ENCODE measurements at regions of chr16 and their contacts with region 1.

Region 1: DNA sequence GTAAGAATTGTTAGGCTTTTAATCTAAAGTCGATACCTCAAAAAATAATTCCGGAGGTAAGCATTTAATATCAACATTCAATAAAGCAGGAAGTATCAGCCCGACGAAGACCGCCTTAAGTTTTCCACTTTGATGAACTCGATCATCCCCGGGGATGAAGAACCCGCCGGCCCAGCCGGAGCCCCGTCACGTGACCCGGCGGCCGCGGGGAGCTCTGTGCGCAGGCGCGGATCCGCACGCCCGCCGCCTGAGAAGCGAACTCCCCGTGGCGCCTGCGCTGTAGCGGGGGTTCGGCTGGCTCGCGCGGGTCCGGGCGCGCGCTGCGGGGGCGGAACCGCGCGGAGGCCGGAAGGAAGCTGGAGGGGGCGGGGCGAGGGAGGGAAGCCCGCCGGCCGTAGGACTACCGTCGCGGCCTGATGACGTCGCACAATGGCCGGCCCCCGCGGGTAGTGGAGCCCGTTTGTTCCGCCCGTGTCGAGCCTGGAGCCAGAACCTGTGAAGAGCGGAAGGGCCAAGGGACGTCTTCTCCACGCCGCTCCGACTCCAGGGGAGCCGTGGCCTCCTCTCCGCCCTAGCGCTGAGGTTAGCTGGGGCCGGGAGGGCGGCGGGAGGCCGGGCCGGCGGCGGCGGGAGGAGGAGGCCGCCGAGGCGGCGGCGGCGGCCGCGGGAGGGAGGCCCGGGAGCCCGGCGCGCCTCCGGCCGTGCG is at the start of gene ZC3H18:
- DNase-seq: peak; percentile 98
- H3K4me3 Mint-ChIP-seq: peak within 1 kb of the TSS; percentile 84
- H3K27ac Mint-ChIP-seq: peak within 1 kb of the TSS; percentile 83
- H3K4me1 Mint-ChIP-seq: peaks cover 40% of the 10 kb centered on the region
- H3K27me3 Mint-ChIP-seq: no peaks in the 10 kb centered on the region
- total RNA-seq, gene ZC3H18: 72.0 to 72.7 TPM

Region 2: DNA sequence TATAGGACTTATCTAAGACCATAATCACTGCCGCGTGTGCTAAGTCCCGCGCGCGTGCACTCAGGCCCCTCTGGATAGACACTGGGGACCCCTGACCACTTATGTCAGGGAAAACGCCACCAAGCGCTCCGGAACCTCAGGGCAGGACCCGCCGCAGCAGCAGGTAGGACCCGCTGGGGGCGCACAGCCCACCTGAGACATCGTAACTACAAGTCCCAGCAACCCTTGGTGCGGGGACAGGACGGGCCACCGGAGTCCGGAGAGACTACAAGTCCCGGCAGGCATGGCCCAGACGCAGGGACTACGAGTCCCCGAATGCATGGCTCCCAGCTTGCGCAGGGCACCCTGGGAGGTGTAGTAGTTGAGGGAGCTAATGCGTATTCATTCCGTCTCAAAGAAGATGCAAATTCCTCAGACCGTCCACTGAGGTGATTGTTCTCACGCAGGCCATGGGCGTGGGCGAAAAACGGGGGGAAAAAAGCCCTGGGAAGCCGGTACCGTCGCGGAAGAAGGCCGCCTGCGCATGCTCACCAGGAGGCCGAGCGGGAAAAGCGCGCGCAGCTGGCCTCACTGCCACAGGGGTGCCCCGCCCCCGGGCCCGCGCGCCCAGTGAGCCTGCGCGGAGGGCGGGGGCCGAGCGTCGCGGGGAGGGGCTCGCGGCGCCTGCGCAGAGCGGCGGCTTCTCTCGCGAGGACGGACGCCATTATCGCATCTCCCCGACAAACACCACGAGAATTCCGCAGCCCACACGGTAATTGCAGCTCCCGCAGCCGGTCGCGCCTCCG is 619.2 kb before region 1 on chr16 and contains the start of gene BANP:
- CTCF ChIA-PET with region 1: interaction called, 3 read pairs
- POLR2A ChIA-PET with region 1: no interaction called
- intact Hi-C with region 1: loop called (anchors 1 kb)
- DNase-seq: peak; percentile 98
- H3K4me3 Mint-ChIP-seq: peak within 1 kb of the TSS; percentile 96
- H3K27ac Mint-ChIP-seq: peak within 1 kb of the TSS; percentile 100
- H3K4me1 Mint-ChIP-seq: peaks cover 43% of the 10 kb centered on the region
- H3K27me3 Mint-ChIP-seq: peaks cover 2% of the 10 kb centered on the region
- total RNA-seq, gene BANP: 29.6 to 30.6 TPM

Region 3: GRCh38 chr16:88452482-88453216 is 117.5 kb before region 1 on chr16:
- CTCF ChIA-PET with region 1: interaction called, 4 read pairs
- POLR2A ChIA-PET with region 1: interaction called, 5 read pairs
- intact Hi-C with region 1: loop called (anchors 2 kb)
- DNase-seq: peak; percentile 99
- H3K4me3 Mint-ChIP-seq: peak overlapping the region; percentile 80
- H3K27ac Mint-ChIP-seq: peak overlapping the region; percentile 84
- H3K4me1 Mint-ChIP-seq: peaks cover 25% of the 10 kb centered on the region
- H3K27me3 Mint-ChIP-seq: no peaks in the 10 kb centered on the region

Region 4: GRCh38 chr16:88591577-88592021 is 21.5 kb after region 1 on chr16:
- CTCF ChIA-PET with region 1: no interaction called
- POLR2A ChIA-PET with region 1: interaction called, 24 read pairs
- intact Hi-C with region 1: loop called (anchors 2 kb)
- DNase-seq: peak; percentile 82
- H3K4me3 Mint-ChIP-seq: no peak overlapping the region
- H3K27ac Mint-ChIP-seq: peak overlapping the region; percentile 79
- H3K4me1 Mint-ChIP-seq: peaks cover 49% of the 10 kb centered on the region
- H3K27me3 Mint-ChIP-seq: no peaks in the 10 kb centered on the region

Region 5: DNA sequence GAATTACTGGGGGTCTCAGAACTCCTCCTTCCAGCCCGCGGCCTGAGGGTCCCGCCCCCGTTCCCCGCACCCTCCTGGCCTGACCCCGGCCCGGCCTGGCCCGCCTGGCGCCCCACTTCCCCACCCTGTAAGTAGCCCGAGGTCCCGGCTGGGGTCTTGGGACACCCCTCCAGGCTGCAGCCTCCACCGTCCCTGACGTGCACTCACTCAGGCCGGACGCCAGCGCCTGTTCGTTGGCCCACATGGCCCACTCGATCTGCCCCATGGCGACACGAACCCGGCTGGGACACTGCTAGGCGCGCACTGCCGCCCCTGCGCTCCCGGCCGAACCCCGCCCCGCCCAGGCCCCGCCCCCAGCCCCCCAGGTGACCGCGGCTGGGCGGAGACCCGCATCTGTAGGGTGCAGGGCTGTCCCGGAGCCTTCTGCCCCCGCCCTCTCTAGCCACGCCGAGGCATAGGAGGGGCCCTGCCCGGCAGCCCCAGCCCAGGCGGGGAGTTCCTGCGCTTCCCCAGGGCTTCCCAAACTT is 80.7 kb after region 1 on chr16 and contains the start of gene CYBA:
- CTCF ChIA-PET with region 1: no interaction called
- POLR2A ChIA-PET with region 1: interaction called, 4 read pairs
- intact Hi-C with region 1: loop called (anchors 1 kb)
- DNase-seq: peak; percentile 93
- H3K4me3 Mint-ChIP-seq: peak within 1 kb of the TSS; percentile 86
- H3K27ac Mint-ChIP-seq: peak within 1 kb of the TSS; percentile 97
- H3K4me1 Mint-ChIP-seq: peaks cover 14% of the 10 kb centered on the region
- H3K27me3 Mint-ChIP-seq: no peaks in the 10 kb centered on the region
- total RNA-seq, gene CYBA: 262 to 265 TPM

Region 6: GRCh38 chr16:88662843-88663606 is 92.9 kb after region 1 on chr16 and contains the start of gene MVD:
- CTCF ChIA-PET with region 1: no interaction called
- POLR2A ChIA-PET with region 1: interaction called, 4 read pairs
- intact Hi-C with region 1: loop called (anchors 1 kb)
- DNase-seq: peak; percentile 98
- H3K4me3 Mint-ChIP-seq: peak within 1 kb of the TSS; percentile 91
- H3K27ac Mint-ChIP-seq: peak within 1 kb of the TSS; percentile 86
- H3K4me1 Mint-ChIP-seq: peaks cover 17% of the 10 kb centered on the region
- H3K27me3 Mint-ChIP-seq: no peaks in the 10 kb centered on the region
- total RNA-seq, gene MVD: 111 to 113 TPM

Region 7: GRCh38 chr16:88706288-88706964 is 136.3 kb after region 1 on chr16 and contains the starts of genes CTU2 and RNF166:
- CTCF ChIA-PET with region 1: interaction called, 3 read pairs
- POLR2A ChIA-PET with region 1: interaction called, 5 read pairs
- intact Hi-C with region 1: loop called (anchors 2 kb)
- DNase-seq: peak; percentile 94
- H3K4me3 Mint-ChIP-seq: peak within 1 kb of the TSS; percentile 82
- H3K27ac Mint-ChIP-seq: peak within 1 kb of the TSS; percentile 91
- H3K4me1 Mint-ChIP-seq: peaks cover 47% of the 10 kb centered on the region
- H3K27me3 Mint-ChIP-seq: no peaks in the 10 kb centered on the region
- total RNA-seq, gene CTU2: 38.0 to 41.6 TPM
- total RNA-seq, gene RNF166: 46.4 to 55.6 TPM